ENCODE measurements at regions of chr12 and their contacts with region 1.

Region 1: DNA sequence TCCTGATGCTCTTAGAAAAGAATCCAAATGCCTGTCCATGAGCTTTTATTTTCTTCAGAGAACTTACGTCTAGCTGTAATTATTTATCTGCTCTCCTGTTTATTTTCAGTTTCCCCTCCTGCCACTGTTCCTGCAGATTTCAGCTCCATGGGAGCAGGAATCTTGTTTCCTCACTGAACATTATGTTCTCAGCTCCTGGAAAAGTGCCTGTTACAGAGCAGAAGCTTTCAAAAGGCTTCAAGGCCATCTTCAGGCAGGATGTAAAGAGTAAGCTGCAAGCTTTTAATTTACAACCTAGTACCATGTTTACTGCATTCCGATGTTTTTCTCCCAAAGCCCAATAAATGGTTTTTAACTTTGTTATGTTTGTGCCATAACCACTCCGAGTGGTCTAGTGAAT is 98.4 kb upstream of the BTG1 start:
- DNase-seq: no peak
- ATAC-seq: peak; percentile 91

Region 2: DNA sequence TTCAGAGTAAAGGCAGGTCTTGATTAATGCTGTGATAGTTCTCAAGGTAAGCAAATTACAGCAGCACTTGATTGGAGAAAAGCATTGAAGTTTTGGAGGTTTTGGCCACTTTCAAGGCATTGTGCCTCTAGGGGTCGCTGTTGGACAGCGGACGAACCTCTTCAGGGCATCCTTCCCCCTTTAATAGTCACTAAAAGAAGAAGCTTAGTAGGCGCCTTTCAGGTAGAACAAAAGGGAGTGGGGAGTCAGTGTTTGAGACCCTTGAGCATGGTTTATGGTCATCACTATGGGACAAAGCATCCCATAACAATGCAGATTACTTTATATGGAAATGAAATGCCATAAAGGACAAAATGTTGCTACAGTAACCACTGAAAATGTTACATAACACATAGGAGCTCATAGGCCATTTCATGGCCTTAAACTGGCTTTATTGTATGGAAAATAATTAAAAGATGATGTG is 861.9 kb before region 1 on chr12:
- intact Hi-C with region 1: loop called (anchors 5 kb)
- DNase-seq: peak; percentile 78
- ATAC-seq: peak; percentile 89

Region 3: DNA sequence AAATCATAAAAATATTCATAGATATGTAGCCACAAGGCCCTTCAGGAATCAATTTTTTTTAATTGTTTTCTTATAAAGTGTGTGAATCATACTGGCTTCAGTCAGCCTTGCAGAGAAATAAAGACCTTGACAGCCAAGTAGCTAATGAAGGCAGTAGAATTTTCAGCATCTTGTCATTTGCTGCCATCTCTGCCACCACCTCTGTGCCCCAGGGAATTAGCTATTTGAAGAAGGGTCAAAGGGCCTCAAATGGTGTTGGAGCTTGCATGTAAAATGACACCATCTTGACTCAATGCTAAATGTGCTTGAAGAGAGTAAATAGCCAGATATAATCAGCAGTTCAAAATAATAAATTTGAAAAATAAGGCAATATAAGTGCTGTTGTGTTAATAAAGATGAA is 701.9 kb before region 1 on chr12:
- intact Hi-C with region 1: no loop called
- DNase-seq: no peak
- ATAC-seq: no peak

Region 4: DNA sequence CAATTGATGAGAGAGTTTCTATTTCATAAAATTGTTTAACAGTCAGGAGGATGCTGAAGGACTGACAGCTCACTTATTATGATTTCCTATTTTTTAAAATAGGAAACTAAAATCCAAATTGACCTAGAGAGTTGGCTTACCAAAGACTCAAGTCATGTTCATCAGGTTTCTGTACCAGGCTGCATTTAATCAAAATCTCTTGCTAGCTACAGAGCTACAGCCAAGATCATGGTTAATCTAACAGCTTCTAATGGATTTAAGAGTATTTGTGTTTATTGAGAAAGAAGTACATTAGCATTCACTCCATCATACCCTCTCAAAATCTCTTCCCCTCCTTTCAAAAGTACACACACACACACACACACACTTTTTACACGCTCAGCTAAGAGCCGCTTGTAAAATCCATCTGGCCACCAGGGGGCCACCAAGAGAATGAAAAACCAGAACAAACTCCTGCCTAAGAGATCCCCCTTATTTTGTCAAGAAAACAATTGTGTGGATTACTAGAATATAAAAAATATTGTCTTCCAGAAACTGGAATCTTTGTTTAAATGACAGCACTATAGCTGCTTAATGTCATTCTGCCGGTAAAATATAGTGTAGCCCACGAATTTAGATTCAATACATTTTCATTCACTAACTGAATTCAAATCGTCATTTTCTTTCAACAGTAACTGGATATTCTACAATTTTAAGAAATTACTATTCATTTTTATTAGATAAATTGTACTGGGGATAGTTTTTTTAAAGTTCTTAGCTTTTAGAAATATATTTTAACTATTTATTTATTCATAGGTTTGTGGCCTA is 432.4 kb before region 1 on chr12:
- intact Hi-C with region 1: loop called (anchors 5 kb)
- DNase-seq: peak; percentile 77
- ATAC-seq: peak; percentile 71

Region 5: GRCh38 chr12:92034858-92035401 is 209.1 kb before region 1 on chr12:
- intact Hi-C with region 1: loop called (anchors 5 kb)
- DNase-seq: no peak
- ATAC-seq: peak; percentile 52

Region 6: DNA sequence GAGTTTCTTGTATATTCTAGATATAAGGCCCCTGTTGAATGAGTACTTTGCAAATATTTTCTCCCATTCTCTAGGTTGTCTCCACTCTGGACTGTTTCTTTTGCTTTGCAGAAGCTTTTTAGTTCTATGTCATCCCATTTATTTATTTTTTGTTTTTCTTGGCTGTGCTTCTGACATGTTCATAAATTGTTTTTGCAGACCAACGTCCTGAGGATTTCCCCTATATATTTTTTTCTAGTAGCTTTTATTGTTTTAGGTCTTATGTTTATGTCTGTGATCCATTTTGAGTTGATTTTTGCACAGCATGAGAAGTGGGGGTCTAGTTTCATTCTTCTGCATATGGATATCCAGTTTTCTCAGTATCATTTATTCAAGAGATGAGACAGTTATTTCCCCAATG is 27.9 kb before region 1 on chr12:
- intact Hi-C with region 1: loop called (anchors 1 kb)
- DNase-seq: no peak
- ATAC-seq: no peak